ENCODE measurements at regions of chr15 and their contacts with region 1.

Region 1: GRCh38 chr15:25426896-25427610 is 11.8 kb downstream of the UBE3A start:
- DNase-seq: no peak
- ATAC-seq: no peak
- H3K4me3 ChIP-seq: no peak overlapping the region
- H3K27ac ChIP-seq: no peak overlapping the region
- H3K4me1 ChIP-seq: peaks cover 0 to 79% (median 43%) of the 10 kb centered on the region in 9 donors
- H3K27me3 ChIP-seq: no peaks in the 10 kb centered on the region
- CTCF ChIP-seq: no peak

Region 2: GRCh38 chr15:25368850-25369249 is 58.2 kb before region 1 on chr15:
- intact Hi-C with region 1: loop called in 1 of 10 experiments (anchors 10 kb)
- DNase-seq: no peak
- ATAC-seq: no peak
- H3K4me3 ChIP-seq: no peak overlapping the region
- H3K27ac ChIP-seq: no peak overlapping the region
- H3K4me1 ChIP-seq: peaks cover 0 to 27% (median 10%) of the 10 kb centered on the region in 9 donors
- H3K27me3 ChIP-seq: no peaks in the 10 kb centered on the region
- CTCF ChIP-seq: no peak

Region 3: DNA sequence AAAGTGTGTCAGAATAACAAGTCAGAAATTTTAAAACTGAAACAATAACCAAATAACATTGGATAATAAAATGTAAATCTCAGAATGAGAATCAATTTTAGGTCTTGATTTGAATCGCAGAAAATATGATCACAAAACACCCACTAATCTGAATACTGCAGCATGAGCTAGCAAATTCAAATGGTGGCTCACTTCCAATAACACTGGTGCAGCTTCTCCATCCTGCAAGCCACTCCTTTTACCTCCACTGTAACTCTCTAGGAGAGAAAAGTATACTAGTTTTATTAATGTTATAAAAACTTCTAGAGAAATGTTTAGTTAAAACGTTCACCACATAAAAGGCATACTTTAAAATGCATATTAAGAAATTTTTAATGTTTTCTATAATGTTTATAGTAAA is 18.6 kb before region 1 on chr15:
- intact Hi-C with region 1: loop called in 1 of 10 experiments (anchors 2 kb)
- DNase-seq: no peak
- ATAC-seq: peak in 3 of 8 donors; percentile 70 to 72 (median 70)
- H3K4me3 ChIP-seq: no peak overlapping the region
- H3K27ac ChIP-seq: peak overlapping the region in 1 of 10 donors; percentile 12
- H3K4me1 ChIP-seq: peaks cover 3 to 74% (median 51%) of the 10 kb centered on the region in 9 donors
- H3K27me3 ChIP-seq: no peaks in the 10 kb centered on the region
- CTCF ChIP-seq: no peak